Mucosa of descending colon (tissue), 3 donors: ENCODE measurements at regions of chr9 and their contacts with region 1.

Region 1: DNA sequence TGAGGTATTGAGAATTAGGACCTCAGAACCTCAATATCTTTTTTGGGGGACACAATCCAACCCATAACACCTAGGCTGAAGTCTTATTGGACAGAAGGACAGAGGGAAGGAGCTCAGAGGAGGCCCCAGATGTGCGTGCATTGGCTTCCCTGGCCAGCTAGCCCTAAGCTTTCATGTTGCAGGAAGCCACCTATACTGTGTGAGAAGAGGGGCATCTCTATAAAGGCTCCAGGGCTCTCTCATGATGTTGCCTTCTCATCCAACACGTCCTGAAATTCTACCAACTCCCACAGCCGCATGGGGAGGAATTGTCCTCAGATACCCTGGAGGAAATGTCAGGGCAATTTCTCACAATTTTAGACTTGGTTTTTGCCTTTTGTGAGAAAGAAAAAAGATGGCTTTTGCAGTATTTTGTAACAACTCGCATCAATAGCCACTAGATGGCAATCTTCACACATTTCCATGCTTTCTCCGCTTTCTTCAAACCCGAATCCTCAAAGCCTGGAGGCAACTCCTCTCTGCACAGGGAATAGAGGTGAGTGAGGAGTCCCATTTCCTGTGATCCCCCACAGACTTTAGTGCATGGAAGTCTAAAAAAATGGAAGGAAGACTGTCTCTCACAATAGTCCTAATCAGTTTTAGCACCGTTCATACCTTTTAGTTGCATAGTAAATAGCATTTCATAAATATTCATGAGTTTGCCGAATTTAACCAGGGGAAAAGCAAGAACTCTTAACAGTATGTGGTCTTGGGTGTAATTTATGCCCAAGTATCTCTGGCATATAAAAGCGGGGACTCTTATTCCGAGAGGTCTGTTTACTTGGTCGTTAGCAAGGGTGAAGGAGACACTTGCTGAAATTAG is 7.4 kb upstream of the PPP3R2 start:
- DNase-seq: peak in 1 of 3 donors; percentile 45
- ATAC-seq: peak; percentile 70
- H3K4me3 ChIP-seq: no peak overlapping the region
- H3K4me1 ChIP-seq: no peaks in the 10 kb centered on the region
- CTCF ChIP-seq: peak; percentile 37

Region 2: DNA sequence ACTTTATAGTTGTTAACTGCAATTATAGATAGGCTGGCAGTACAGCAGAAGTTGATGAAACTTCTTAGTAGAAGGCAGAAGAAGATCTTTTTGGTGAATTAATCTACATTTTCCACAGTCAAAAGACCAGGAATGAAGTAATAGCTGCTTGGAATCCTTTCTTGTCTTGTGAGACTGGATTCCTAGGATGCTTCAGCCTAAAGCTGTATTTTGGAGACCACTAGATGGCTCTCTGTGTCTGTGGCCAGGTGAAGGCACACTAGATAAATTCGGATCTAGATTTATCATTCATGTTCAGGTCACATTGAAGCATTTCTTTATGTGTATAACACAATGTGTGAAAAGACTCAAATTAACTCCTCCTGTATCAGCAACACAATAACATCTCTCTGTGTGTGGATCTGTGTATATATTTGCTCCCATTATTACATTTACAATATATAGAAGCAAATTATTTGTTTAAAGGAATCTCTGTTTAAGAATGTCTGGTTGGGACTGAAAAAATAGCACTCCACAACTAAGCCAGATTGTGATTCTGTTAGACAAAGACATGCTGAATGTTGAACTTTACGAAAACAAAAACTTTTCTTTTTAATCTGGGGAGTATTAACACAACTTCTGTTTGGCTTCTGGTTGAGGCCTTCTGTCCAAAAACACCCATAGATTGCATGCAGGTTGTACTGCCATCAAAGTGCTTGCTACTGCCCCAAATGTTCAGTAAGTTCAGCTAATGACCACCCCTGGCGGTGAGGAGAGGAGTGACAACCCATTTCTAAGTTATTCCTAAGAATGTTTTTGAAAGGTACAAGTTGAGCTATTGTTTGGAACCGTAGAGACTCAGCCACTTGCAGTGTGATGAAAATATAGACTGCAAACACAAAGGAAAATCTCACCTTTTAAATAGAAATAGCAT is 125.7 kb after region 1 on chr9:
- intact Hi-C with region 1: loop called in 1 of 2 experiments (anchors 5 kb)
- DNase-seq: peak in 1 of 3 donors; percentile 34
- ATAC-seq: peak; percentile 62
- H3K4me3 ChIP-seq: no peak overlapping the region
- H3K4me1 ChIP-seq: no peaks in the 10 kb centered on the region
- CTCF ChIP-seq: peak; percentile 38